ENCODE measurements at regions of chr19 and their contacts with region 1.

Region 1: DNA sequence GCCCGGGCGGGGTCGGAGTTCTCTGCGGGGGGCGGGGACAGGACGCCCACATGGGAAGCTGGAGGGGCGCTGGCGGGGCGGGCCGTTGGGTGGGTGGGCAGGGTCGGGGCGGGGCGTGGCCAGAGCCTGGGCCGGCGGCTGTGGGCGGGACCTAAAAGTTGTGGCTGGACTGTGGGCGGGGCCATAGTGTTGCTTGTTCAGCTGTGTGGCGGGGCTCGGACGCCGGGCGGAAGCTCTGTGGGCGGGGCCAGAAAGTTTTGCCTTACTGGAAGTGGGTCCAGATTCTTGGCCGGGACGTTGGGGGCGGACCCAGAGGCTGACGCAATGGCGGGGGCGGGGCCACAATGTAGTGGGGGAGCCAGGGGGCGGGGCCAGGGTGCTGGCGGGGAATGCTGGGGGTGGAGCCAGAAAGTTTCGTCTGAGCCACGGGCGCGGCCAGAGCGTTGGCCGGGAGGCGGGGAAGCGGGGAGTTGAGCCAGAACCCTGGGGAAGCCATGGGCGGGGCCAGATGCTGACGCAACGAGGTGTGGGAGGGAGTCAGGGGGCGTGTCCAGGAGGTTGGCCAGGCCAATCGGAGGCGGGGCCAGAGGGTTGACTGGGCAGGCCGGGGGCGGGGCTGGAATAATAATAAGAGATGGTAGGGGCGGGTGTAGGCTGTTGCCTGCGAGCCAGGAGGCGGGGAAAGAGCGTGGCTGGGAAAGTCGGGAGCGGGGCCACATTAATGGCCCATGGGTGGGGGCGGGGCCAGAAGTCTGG is 541 bp downstream of the CCDC9 start:
- DNase-seq: peak; percentile 100
- H3K4me3 Mint-ChIP-seq: peak overlapping the region; percentile 90
- H3K27ac Mint-ChIP-seq: peak overlapping the region; percentile 98
- H3K4me1 Mint-ChIP-seq: peaks cover 32% of the 10 kb centered on the region
- H3K27me3 Mint-ChIP-seq: no peaks in the 10 kb centered on the region

Region 2: GRCh38 chr19:46717034-46717723 is 539.7 kb before region 1 on chr19 and contains the start of gene PRKD2:
- CTCF ChIA-PET with region 1: no interaction called
- POLR2A ChIA-PET with region 1: no interaction called
- intact Hi-C with region 1: loop called (anchors 2 kb)
- DNase-seq: peak; percentile 94
- H3K4me3 Mint-ChIP-seq: peak within 1 kb of the TSS; percentile 93
- H3K27ac Mint-ChIP-seq: peak within 1 kb of the TSS; percentile 95
- H3K4me1 Mint-ChIP-seq: peaks cover 38% of the 10 kb centered on the region
- H3K27me3 Mint-ChIP-seq: no peaks in the 10 kb centered on the region
- total RNA-seq, gene PRKD2: 78.8 to 84.4 TPM

Region 3: DNA sequence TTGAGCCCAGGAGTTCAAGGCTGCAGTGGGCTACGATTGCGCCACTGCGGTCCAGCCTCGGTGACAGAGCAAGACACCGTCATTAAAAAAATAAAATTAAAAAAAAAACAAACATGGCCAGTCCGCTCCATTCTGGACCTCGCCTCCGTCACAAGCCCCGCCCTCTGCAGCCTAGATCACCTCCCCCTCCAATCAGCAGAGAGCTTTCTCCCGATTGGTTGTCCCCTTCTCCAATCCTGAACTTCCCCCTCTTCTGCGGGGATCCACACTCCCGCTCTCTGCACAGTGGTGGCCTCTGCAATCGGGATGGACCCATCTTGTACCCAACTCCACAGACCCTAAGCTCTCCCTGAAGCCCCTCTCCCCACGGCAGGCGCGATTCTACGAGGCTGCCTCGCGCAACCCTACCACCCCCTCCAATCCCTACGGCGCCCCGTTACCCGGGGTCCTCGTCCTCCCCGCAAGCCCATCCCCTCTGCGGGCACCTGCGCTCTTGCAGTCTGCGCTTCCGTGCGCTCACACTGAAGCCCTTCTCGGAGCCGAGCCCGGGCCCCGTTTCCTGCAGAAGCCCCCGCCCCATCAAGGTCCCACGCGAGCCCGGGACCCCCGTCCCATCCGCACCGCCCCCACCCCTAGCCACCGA is 209.0 kb before region 1 on chr19:
- CTCF ChIA-PET with region 1: no interaction called
- POLR2A ChIA-PET with region 1: interaction called, 3 read pairs
- intact Hi-C with region 1: loop called (anchors 1 kb)
- DNase-seq: peak; percentile 91
- H3K4me3 Mint-ChIP-seq: peak overlapping the region; percentile 99
- H3K27ac Mint-ChIP-seq: peak overlapping the region; percentile 87
- H3K4me1 Mint-ChIP-seq: peaks cover 12% of the 10 kb centered on the region
- H3K27me3 Mint-ChIP-seq: peaks cover 1% of the 10 kb centered on the region

Region 4: GRCh38 chr19:47225746-47226425 is 31.0 kb before region 1 on chr19:
- CTCF ChIA-PET with region 1: interaction called, 4 read pairs
- POLR2A ChIA-PET with region 1: interaction called, 9 read pairs
- intact Hi-C with region 1: loop called (anchors 1 kb)
- DNase-seq: peak; percentile 88
- H3K4me3 Mint-ChIP-seq: peak overlapping the region; percentile 77
- H3K27ac Mint-ChIP-seq: peak overlapping the region; percentile 89
- H3K4me1 Mint-ChIP-seq: peaks cover 10% of the 10 kb centered on the region
- H3K27me3 Mint-ChIP-seq: no peaks in the 10 kb centered on the region

Region 5: GRCh38 chr19:47608074-47608918 is 351.4 kb after region 1 on chr19:
- CTCF ChIA-PET with region 1: no interaction called
- POLR2A ChIA-PET with region 1: no interaction called
- intact Hi-C with region 1: loop called (anchors 5 kb)
- DNase-seq: peak; percentile 97
- H3K4me3 Mint-ChIP-seq: peak overlapping the region; percentile 84
- H3K27ac Mint-ChIP-seq: peak overlapping the region; percentile 80
- H3K4me1 Mint-ChIP-seq: peaks cover 34% of the 10 kb centered on the region
- H3K27me3 Mint-ChIP-seq: no peaks in the 10 kb centered on the region

Measured in activated CD4-positive, alpha-beta memory T cell treated with anti-CD3 and anti-CD28 coated beads for 36 hours (primary cell).